ENCODE measurements at regions of chr17 and their contacts with region 1.

Region 1: DNA sequence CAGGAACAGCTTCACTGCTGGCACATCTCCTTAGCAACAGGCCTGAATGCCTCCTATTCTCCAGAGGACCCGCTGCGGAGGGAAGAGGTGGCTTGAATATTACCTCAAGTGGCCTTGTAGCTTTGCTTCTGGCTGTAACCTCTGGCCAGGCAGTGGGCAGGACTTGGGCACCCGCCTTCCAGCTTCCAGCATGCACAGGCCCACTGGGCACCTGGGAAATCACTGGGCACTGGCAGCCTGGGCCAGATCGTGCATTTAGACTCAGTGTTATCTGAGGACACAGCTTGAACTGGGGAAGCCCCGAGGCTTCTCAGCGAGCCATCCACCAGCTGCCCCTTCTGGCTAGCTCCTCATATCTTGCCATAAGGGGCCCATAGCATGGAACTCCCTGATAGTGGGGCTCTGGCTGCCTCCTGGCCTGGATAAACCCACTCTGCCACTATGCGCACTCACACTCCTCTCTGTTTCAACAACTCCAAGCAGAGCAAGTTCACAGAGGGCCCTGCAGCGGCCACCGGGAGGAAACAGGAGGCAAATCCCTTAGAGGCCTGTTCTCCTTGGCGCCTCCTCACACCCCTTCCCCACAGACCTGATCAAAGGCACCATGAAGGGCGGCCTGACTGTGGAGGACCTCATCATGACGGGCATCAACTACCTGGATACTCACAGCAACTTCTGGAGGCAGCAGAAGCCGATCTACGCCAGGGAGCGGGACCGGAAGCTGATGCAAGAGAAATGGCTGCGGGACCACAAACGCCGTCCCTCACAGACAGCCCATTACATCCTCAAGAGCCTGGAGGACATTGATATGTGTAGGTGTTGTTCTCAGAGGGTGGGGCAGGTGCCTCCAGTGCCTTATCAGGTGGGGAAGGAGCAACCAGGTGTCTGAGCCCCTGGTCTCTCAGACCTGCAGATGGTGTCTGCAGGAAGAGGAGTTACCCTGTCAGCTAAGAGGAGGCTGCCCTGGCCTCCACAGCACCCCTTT is 7.8 kb downstream of the ODAD4 start:
- DNase-seq: peak; percentile 48 to 75 (median 66)
- ATAC-seq: peak; percentile 67
- H3K4me3 ChIP-seq: no peak overlapping the region
- H3K27ac ChIP-seq: peak overlapping the region; percentile 66; the same call in 2 of the 3 replicates
- H3K4me1 ChIP-seq: peaks cover 25 to 29% of the 10 kb centered on the region in 2 experiments
- H3K27me3 ChIP-seq: no peaks in the 10 kb centered on the region
- CTCF ChIP-seq: no peak
- EP300 ChIP-seq: peak; percentile 34; the same call in 1 of the 2 replicates
- POLR2A ChIP-seq: no peak
- RAD21 ChIP-seq: no peak

Region 2: DNA sequence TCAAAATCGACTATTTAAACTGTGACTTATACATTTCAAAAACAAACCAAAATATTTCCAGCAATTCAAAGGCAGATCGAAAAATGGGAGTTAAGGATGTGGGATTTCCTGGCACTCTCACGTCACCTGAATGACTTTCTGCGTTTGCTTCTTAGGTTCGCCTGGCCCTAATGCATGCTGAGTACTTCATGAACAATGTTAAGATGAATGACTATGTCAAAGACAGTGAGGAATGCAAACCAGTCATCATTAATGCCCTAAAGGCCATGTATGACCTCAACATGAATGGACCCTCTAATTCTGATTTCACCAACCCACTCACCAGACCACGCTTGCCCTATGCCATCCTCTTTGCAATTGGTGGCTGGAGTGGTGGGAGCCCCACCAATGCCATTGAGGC is 93.3 kb before region 1 on chr17:
- CTCF ChIA-PET with region 1: no interaction called
- POLR2A ChIA-PET with region 1: no interaction called
- in situ Hi-C with region 1: no loop called
- intact Hi-C with region 1: no loop called
- DNase-seq: no peak
- ATAC-seq: no peak
- H3K4me3 ChIP-seq: no peak overlapping the region
- H3K27ac ChIP-seq: no peak overlapping the region
- H3K4me1 ChIP-seq: no peaks in the 10 kb centered on the region; a peak in 1 of 5 replicates
- H3K27me3 ChIP-seq: no peaks in the 10 kb centered on the region
- CTCF ChIP-seq: no peak
- EP300 ChIP-seq: no peak
- POLR2A ChIP-seq: no peak
- RAD21 ChIP-seq: no peak

Region 3: DNA sequence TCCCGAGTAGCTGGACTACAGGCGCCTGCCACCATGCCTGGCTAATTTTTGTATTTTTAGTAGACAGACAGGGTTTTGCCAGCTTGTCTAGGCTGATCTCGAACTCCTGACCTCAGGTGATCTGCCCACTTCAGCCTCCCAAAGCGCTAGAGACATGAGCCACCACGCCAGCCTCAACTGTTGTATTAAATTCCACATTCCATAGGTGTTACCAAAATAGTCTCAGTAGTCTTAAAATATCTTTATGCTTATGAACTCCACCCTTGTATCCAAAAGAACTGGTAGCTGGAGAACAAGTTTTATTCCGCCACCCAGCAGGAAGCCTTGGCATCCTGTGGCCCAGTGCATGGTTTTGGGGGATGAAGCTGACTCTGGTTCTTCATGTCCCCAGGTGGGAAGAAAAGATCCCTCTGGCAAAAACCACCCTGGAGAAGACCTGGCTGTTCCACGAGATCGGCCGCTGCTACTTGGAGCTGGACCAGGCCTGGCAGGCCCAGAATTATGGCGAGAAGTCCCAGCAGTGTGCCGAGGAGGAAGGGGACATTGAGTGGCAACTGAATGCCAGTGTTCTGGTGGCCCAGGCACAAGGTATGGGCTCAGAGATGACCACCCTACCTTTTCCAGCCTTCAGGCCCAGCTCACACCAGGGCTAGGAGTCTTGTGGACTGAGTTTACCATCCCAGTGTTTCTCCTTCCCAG is 10.6 kb after region 1 on chr17:
- CTCF ChIA-PET with region 1: no interaction called
- POLR2A ChIA-PET with region 1: interaction called, 13 read pairs
- in situ Hi-C with region 1: no loop called
- intact Hi-C with region 1: no loop called
- DNase-seq: no peak
- ATAC-seq: no peak
- H3K4me3 ChIP-seq: no peak overlapping the region
- H3K27ac ChIP-seq: no peak overlapping the region
- H3K4me1 ChIP-seq: peaks cover 0 to 3% of the 10 kb centered on the region in 2 experiments; a peak in 1 of 5 replicates
- H3K27me3 ChIP-seq: no peaks in the 10 kb centered on the region
- CTCF ChIP-seq: no peak
- EP300 ChIP-seq: no peak
- POLR2A ChIP-seq: no peak
- RAD21 ChIP-seq: no peak

Measured in K562 (cell line).